Right cardiac atrium (tissue), 5 donors: ENCODE measurements at regions of chr1 and their contacts with region 1.

Region 1: DNA sequence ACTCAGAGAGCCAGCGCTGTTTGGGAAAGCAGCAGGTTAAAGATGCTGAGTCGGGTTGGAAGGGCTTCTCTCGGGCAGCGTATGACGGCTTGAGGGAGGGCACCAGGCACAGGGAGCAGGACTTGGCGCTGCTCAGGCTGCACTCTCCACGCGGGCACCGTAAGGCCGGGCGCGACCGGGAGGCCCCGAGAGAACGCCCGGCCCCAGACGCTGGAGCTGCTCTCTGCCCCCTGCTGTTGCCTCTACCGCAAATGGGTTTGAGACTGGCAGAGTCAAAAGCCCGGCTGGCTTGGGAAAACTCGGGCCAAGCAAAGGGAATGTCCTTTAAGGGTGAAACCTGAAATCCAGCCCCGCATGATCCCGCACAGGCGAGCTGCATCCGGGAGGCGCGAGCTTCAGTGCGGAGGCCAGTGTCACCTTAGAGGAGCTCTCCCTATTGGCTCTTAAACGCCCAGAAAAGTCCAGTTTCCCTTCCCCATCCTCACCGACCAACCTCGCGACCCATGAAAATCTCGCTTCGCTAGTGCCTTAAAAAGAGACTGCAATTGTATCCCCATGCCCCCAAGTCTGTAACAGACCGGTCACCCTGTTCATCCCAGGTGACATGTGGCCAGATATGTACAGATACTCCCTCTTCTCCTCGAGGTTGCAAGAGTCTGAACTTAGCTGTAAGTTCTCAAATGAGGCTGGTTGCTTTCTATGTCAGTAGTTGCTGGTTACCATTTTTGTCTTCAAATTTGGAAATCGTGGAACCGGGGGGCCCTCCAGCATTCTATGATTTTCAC is 1.1 kb downstream of the PRRX1 start:
- DNase-seq: peak; percentile 60 to 80 (median 80)
- ATAC-seq: peak; percentile 70 to 79
- H3K4me3 ChIP-seq: peak overlapping the region; percentile 76
- H3K27ac ChIP-seq: peak overlapping the region; percentile 75
- H3K4me1 ChIP-seq: peaks cover 2% of the 10 kb centered on the region
- H3K27me3 ChIP-seq: no peaks in the 10 kb centered on the region

Region 2: DNA sequence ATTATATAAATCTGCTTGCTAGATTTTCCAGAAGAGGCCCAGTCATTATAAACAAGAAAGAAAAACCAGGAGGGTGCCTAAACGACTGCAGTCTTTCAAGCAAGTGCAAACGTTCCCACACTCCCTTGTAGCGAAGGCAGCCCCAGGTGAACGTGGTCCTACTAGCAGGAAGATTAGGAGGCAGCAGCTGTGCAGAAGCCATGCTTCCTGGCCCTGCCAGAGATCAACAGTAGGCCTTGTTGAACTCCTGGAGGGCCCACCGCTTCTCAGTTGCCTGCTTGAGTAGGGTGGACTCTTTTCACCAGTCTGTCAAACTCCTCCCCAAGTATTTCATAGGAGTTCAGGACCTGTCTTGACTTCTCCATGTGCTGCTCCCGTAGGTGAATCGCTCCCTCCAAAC is 296.0 kb before region 1 on chr1:
- intact Hi-C with region 1: no loop called
- DNase-seq: no peak
- ATAC-seq: no peak
- H3K4me3 ChIP-seq: no peak overlapping the region
- H3K27ac ChIP-seq: no peak overlapping the region
- H3K4me1 ChIP-seq: no peaks in the 10 kb centered on the region
- H3K27me3 ChIP-seq: no peaks in the 10 kb centered on the region

Region 3: DNA sequence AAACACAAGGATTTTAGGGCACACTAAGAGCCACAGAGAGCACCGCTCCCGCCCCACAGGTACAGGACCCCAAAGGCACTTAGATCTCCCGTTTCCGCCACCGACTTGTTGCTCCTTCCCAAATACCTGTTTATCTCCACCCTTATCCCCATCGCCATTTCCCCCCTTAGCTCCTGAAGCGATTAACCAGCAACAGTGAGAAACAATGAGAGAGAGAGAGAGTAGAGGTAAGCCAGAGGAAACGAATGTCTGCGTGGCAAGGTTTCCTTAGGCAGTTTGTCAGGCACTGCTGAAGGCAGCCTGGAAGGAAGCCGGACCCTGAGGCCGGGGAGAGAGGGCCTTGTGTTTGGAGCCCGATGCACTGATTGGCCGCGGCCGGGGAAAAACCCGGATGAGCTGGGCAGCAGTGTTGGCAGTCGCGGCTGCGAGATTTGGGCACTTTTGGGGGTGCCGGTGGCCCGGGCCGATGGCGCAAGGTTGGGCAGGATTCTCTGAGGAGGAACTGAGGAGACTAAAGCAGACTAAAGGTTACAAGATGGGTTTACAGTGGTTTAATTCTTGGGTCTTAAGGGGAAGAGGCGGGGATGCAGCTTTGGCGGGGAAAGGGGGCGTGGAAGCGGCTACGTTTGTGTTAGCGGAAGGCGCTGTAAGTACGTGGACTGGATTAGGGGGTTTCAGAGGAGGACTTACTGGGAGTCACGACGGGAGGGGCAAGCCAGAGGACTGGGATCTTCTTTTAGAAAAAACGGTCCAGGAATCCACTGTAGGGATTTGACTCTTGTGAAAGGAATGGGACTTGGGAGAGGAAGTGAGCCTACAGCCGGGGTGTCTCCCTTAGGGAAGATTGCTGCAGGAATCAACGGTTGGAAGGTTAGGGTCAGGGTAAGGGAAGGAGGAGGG is 133.0 kb before region 1 on chr1 and contains the start of gene GORAB:
- intact Hi-C with region 1: loop called in 1 of 4 experiments (anchors 10 kb)
- DNase-seq: peak; percentile 94 to 97 (median 96)
- ATAC-seq: peak; percentile 99 to 100
- H3K4me3 ChIP-seq: peak within 1 kb of the TSS; percentile 98
- H3K27ac ChIP-seq: peak within 1 kb of the TSS; percentile 99
- H3K4me1 ChIP-seq: no peaks in the 10 kb centered on the region
- H3K27me3 ChIP-seq: no peaks in the 10 kb centered on the region
- total RNA-seq, gene GORAB: 9.0 to 10.9 (median 10.0) TPM